ENCODE measurements at regions of chr4 and their contacts with region 1.

Region 1: GRCh38 chr4:10164877-10165283 is 48.3 kb upstream of the WDR1 start:
- DNase-seq: peak; percentile 74
- H3K4me3 ChIP-seq: no peak overlapping the region
- H3K27ac ChIP-seq: no peak overlapping the region
- H3K4me1 ChIP-seq: 0 out of 2 replicates have a peak, but pooled peaks cover 8% of the 10 kb centered on the region
- H3K27me3 ChIP-seq: no peaks in the 10 kb centered on the region

Region 2: DNA sequence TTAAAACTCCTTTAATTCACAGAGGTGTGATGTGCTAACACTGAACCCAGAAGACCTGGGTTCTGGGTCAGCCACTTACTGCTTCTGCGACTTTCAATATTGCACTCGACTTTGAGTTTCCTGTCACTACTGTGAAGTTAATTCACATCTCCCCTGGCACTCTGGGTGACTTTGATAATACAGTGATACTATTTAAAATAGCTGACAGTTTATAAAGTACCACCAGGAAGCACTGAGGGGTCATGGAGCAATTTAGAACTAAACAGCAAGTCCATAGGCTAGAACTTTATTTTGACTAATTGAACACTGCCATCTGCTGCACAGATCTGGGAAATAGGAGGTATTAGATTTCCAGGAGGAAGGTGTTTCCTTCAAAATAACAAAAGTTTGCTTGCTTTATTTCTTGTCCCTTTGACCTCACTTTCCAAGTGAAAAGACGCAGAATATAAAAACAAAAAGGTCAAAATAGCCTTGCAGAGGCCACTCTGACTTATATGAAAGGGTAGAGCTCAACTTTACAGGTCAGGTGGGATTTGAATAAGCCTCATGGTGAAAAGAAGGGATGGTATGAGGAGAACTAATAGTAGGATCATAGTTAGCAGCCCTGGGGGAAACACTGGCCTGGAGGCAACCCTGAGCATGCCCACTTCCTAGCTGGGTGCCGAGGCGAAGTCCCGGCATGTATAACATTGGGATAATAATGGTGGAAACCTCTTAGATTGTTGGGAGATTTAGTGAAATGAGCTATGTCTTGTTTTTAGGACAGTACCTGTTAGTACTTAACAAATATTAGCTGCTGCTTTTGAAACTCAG is 239.0 kb after region 1 on chr4:
- in situ Hi-C with region 1: loop called (anchors 5 kb)
- DNase-seq: peak; percentile 66
- H3K4me3 ChIP-seq: no peak overlapping the region
- H3K27ac ChIP-seq: no peak overlapping the region
- H3K4me1 ChIP-seq: no peaks in the 10 kb centered on the region
- H3K27me3 ChIP-seq: no peaks in the 10 kb centered on the region

Region 3: GRCh38 chr4:10743357-10743756 is 578.5 kb after region 1 on chr4:
- in situ Hi-C with region 1: no loop called
- DNase-seq: no peak
- H3K4me3 ChIP-seq: no peak overlapping the region
- H3K27ac ChIP-seq: no peak overlapping the region
- H3K4me1 ChIP-seq: peaks cover 5% of the 10 kb centered on the region
- H3K27me3 ChIP-seq: no peaks in the 10 kb centered on the region

Measured in GM23248 (cell line).